Psoas muscle (tissue), 8 donors: ENCODE measurements at regions of chr11 and their contacts with region 1.

Region 1: GRCh38 chr11:62612366-62613290 is at the starts of genes EML3 and ROM1:
- DNase-seq: peak; percentile 94 to 95
- ATAC-seq: peak; percentile 82 to 88 (median 86)
- H3K4me3 ChIP-seq: peak within 1 kb of the TSS; percentile 82
- H3K27ac ChIP-seq: peak within 1 kb of the TSS; percentile 94
- H3K4me1 ChIP-seq: peaks cover 12% of the 10 kb centered on the region
- H3K27me3 ChIP-seq: no peaks in the 10 kb centered on the region
- CTCF ChIP-seq: peak; percentile 88
- total RNA-seq, gene EML3: 14.1 to 19.5 (median 16.9) TPM
- total RNA-seq, gene ROM1: 2.0 to 4.4 (median 3.1) TPM

Region 2: DNA sequence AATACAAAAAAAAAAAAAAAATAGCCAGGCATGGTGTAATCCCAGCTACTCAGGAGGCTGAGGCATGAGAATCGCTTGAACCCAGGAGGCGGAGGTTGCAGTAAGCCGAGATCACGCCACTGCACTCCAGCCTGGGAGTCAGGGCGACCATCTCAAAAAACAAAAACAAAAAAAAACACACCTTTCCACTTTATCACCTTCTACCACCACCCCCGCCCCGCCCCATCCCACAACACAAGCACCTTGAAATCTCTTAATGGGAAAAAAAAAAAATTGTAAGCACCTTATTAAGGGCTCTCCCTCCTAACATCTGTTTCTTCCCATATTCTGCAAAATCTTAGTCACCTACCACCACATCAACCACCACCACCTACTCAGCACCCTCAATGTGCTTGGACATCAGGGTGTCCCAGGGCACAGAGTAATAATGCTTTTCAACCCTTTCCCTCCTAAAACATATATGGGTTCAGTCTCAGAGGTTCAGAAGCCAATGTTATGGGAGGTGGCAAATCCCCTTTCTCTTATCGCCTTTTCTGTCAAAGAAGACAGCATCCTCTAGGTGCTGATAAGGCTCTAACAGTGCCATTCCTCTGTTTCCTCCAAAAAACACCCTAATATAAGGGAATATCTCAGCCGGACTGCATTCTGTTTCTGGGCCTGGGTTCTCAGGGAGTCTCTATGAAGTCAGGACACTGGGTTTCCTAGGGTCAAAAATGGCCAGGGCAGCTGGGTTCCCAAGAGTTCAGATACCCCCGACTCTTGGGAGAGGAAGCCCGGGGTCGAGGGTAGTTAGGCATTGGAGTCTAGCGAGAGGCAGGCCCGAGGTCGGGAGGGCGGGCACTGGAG is 39.8 kb after region 1 on chr11:
- intact Hi-C with region 1: loop called in 1 of 2 experiments (anchors 5 kb)
- DNase-seq: no peak
- ATAC-seq: no peak
- H3K4me3 ChIP-seq: peak overlapping the region; percentile 93
- H3K27ac ChIP-seq: peak overlapping the region; percentile 95
- H3K4me1 ChIP-seq: peaks cover 11% of the 10 kb centered on the region
- H3K27me3 ChIP-seq: no peaks in the 10 kb centered on the region
- CTCF ChIP-seq: no peak

Region 3: GRCh38 chr11:63080682-63081081 is 468.1 kb after region 1 on chr11:
- intact Hi-C with region 1: no loop called
- DNase-seq: no peak
- ATAC-seq: no peak
- H3K4me3 ChIP-seq: no peak overlapping the region
- H3K27ac ChIP-seq: no peak overlapping the region
- H3K4me1 ChIP-seq: no peaks in the 10 kb centered on the region
- H3K27me3 ChIP-seq: peaks cover 0 to 3% (median 0%) of the 10 kb centered on the region in 3 donors
- CTCF ChIP-seq: no peak